CD4-positive, alpha-beta T cell (primary cell): ENCODE measurements at regions of chr9 and their contacts with region 1.

Region 1: GRCh38 chr9:18678821-18679590 is 205.1 kb downstream of the ADAMTSL1 start:
- DNase-seq: no peak
- ATAC-seq: no peak
- H3K4me3 ChIP-seq: no peak overlapping the region
- H3K4me3 Mint-ChIP-seq: no peak overlapping the region
- H3K27ac ChIP-seq: no peak overlapping the region
- H3K27ac Mint-ChIP-seq: no peak overlapping the region
- H3K4me1 ChIP-seq: no peaks in the 10 kb centered on the region
- H3K4me1 Mint-ChIP-seq: no peaks in the 10 kb centered on the region
- H3K27me3 ChIP-seq: peaks cover 0 to 3% of the 10 kb centered on the region in 2 experiments
- H3K27me3 Mint-ChIP-seq: peaks cover 5% of the 10 kb centered on the region
- CTCF ChIP-seq: no peak

Region 2: GRCh38 chr9:18610956-18611355 is 68.0 kb before region 1 on chr9:
- CTCF ChIA-PET with region 1: no interaction called
- POLR2A ChIA-PET with region 1: no interaction called
- intact Hi-C with region 1: loop called in 1 of 2 experiments (anchors 10 kb)
- DNase-seq: no peak
- ATAC-seq: no peak
- H3K4me3 ChIP-seq: no peak overlapping the region
- H3K4me3 Mint-ChIP-seq: no peak overlapping the region
- H3K27ac ChIP-seq: no peak overlapping the region
- H3K27ac Mint-ChIP-seq: no peak overlapping the region
- H3K4me1 ChIP-seq: no peaks in the 10 kb centered on the region
- H3K4me1 Mint-ChIP-seq: no peaks in the 10 kb centered on the region
- H3K27me3 ChIP-seq: no peaks in the 10 kb centered on the region
- H3K27me3 Mint-ChIP-seq: peaks cover 3% of the 10 kb centered on the region
- CTCF ChIP-seq: no peak

Region 3: DNA sequence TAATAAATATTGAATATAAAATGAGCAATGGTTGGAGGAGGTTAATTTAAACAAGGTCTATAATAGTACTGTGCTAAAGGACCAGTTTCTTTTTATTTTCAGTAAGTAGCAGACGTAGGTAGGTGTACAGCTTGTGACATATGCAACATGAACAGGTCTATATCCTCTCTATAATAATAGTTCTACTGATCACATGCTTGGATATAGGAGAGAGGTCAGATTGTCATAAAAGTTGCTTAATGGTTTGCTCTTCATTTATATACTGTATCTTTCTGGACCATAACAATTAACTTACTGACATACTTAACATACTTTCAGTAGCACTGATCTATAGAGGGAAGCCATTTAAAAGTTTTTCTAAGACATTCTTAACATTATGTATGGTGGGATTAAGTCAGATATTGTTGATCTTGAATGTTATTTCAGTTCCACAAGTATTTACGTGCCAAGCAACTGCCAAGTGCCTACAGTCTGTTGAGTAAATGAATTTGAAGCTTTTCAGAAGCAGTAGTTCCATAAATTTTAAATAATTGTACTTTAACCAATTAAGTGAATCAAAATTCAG is 619.5 kb after region 1 on chr9:
- CTCF ChIA-PET with region 1: no interaction called
- POLR2A ChIA-PET with region 1: no interaction called
- intact Hi-C with region 1: no loop called
- DNase-seq: no peak
- ATAC-seq: no peak
- H3K4me3 ChIP-seq: no peak overlapping the region
- H3K4me3 Mint-ChIP-seq: no peak overlapping the region
- H3K27ac ChIP-seq: no peak overlapping the region
- H3K27ac Mint-ChIP-seq: no peak overlapping the region
- H3K4me1 ChIP-seq: no peaks in the 10 kb centered on the region
- H3K4me1 Mint-ChIP-seq: no peaks in the 10 kb centered on the region
- H3K27me3 ChIP-seq: no peaks in the 10 kb centered on the region
- H3K27me3 Mint-ChIP-seq: no peaks in the 10 kb centered on the region
- CTCF ChIP-seq: no peak